Activated CD4-positive, alpha-beta memory T cell treated with anti-CD3 and anti-CD28 coated beads, Interleukin-2, amount 10 ng/mL, durations not matched to agents 7 days and 5 days (primary cell): ENCODE measurements at regions of chr19 and their contacts with region 1.

Region 1: DNA sequence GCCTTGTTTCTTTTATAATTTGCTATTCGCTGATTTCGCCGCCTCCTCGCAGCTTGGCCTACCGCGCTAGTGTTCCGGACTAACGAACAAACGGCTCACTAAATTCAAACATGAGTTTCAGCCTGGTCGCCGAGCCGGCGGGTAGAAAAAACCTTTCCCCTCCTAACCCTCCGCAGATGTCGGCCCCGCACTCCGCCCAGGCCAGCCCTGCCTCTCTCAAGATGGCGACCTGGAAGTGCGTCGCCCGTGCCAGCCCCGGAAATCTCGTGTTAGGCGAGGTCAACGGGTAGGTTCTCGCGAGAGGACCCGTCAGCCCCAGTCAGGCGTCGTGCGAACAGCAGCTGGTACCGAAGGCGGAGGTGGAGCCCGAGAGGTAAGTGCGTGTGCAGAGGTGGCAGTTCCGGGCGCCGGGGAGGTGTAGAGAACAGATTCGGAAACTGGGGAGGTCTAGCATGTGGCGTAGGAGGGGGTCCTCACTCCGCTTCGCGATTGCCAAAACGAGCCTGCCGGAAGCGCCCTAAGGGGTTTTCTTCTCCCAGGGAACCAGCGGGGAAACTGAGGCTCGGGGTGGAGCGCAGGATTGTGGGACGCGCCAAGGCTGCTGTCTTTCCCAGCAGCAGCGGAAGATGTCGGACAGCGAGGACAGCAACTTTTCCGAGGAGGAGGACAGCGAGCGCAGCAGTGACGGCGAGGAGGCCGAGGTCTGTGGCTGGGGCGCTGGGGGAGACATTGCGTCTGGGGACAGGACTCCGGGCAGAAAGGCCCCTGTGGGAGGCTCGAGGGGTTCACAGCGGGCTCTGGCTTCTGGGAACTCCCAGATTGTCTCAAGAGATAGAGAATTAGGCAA is at the start of gene SUPT5H:
- DNase-seq: peak; percentile 99
- H3K4me3 Mint-ChIP-seq: peak within 1 kb of the TSS; percentile 91
- H3K27ac Mint-ChIP-seq: peak within 1 kb of the TSS; percentile 94
- H3K4me1 Mint-ChIP-seq: peaks cover 50% of the 10 kb centered on the region
- H3K27me3 Mint-ChIP-seq: no peaks in the 10 kb centered on the region
- total RNA-seq, gene SUPT5H: 153 to 159 TPM

Region 2: GRCh38 chr19:39397360-39398296 is 47.9 kb before region 1 on chr19:
- CTCF ChIA-PET with region 1: interaction called, 3 read pairs
- POLR2A ChIA-PET with region 1: interaction called, 20 read pairs
- DNase-seq: peak; percentile 95
- H3K4me3 Mint-ChIP-seq: peak overlapping the region; percentile 68
- H3K27ac Mint-ChIP-seq: peak overlapping the region; percentile 96
- H3K4me1 Mint-ChIP-seq: peaks cover 76% of the 10 kb centered on the region
- H3K27me3 Mint-ChIP-seq: no peaks in the 10 kb centered on the region

Region 3: DNA sequence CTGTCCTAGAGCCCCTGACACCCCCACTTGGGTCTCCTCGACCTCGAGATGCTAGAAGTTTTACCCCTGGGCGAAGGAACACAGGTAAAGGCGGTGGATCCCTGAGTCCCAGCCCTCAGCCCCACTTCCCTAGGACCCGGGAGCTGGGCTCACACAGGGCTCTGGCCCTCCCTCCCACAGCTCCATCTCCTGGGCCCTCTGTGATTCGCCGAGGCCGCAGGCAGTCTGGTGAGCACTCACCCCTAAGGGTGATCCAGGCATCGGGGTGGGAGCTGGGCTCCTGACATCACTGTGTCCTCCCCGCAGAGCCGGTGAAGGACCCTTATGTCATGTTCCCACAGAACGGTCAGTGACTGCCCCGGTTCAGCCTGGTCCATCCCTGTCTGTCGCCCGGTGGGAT is 24.7 kb before region 1 on chr19:
- CTCF ChIA-PET with region 1: no interaction called
- POLR2A ChIA-PET with region 1: no interaction called
- DNase-seq: no peak
- H3K4me3 Mint-ChIP-seq: no peak overlapping the region
- H3K27ac Mint-ChIP-seq: no peak overlapping the region
- H3K4me1 Mint-ChIP-seq: no peaks in the 10 kb centered on the region
- H3K27me3 Mint-ChIP-seq: no peaks in the 10 kb centered on the region

Region 4: GRCh38 chr19:39474139-39474622 is 28.7 kb after region 1 on chr19:
- CTCF ChIA-PET with region 1: interaction called, 16 read pairs
- POLR2A ChIA-PET with region 1: no interaction called
- DNase-seq: peak; percentile 66
- H3K4me3 Mint-ChIP-seq: no peak overlapping the region
- H3K27ac Mint-ChIP-seq: no peak overlapping the region
- H3K4me1 Mint-ChIP-seq: peaks cover 11% of the 10 kb centered on the region
- H3K27me3 Mint-ChIP-seq: no peaks in the 10 kb centered on the region

Region 5: DNA sequence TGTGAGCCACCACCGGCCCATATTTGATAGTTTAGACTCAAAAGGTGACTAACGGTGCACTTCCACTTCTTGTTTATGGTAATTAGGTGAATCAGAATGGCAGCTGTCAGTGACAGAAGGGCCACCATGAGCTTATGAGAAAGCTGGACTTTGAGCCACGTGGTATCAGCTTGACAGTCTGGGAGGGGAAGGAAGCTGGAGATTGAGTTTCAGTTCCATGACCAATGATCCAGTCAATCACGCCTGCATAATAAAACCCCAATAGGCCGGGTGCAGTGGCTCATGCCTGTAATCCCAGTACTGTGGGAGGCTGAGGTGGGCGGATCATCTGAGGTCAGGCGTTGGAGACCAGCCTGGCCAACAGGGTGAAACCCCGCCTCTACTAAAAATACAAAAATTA is 79.0 kb after region 1 on chr19:
- CTCF ChIA-PET with region 1: interaction called, 10 read pairs
- POLR2A ChIA-PET with region 1: interaction called, 3 read pairs
- DNase-seq: no peak
- H3K4me3 Mint-ChIP-seq: no peak overlapping the region
- H3K27ac Mint-ChIP-seq: no peak overlapping the region
- H3K4me1 Mint-ChIP-seq: peaks cover 4% of the 10 kb centered on the region
- H3K27me3 Mint-ChIP-seq: no peaks in the 10 kb centered on the region

Region 6: GRCh38 chr19:39671738-39672363 is 226.4 kb after region 1 on chr19:
- CTCF ChIA-PET with region 1: interaction called, 18 read pairs
- POLR2A ChIA-PET with region 1: no interaction called
- DNase-seq: peak; percentile 48
- H3K4me3 Mint-ChIP-seq: no peak overlapping the region
- H3K27ac Mint-ChIP-seq: no peak overlapping the region
- H3K4me1 Mint-ChIP-seq: peaks cover 26% of the 10 kb centered on the region
- H3K27me3 Mint-ChIP-seq: peaks cover 15% of the 10 kb centered on the region